OCI-LY7 (cell line): ENCODE measurements at regions of chr6 and their contacts with region 1.

Region 1: DNA sequence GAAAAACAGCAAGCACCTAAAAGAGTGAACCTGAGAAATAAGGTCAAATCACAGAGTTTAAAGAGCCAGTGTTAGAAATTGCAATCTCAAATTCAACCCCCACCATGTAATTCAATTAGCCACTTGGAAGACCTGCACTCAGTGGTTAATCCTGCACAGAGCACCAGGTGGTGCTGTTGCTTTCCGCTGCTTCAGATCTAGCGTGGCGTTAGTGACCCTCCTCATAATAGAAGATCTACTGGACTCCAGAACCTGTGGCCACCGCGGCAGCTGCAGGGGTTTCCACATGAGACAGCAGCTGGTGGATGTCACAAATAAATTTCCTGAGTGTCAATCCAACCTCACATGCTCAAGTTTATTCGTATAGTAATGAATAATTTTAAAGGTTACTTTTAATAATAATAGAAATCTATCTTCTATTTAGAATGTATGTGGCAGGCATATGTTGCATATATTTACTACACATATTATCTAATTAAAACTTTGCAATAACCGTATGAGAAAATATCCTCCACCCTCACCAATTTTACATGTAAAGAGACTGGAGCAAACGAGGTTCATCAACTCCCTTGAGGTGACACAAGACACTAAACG is 84.4 kb downstream of the SYNE1 start:
- DNase-seq: peak; percentile 74
- H3K4me3 ChIP-seq: no peak overlapping the region
- H3K27ac ChIP-seq: no peak overlapping the region
- H3K4me1 ChIP-seq: no peaks in the 10 kb centered on the region
- CTCF ChIP-seq: peak; percentile 95

Region 2: GRCh38 chr6:152295346-152295745 is 257.4 kb before region 1 on chr6:
- CTCF ChIA-PET with region 1: no interaction called
- POLR2A ChIA-PET with region 1: no interaction called
- intact Hi-C with region 1: no loop called
- DNase-seq: no peak
- H3K4me3 ChIP-seq: no peak overlapping the region
- H3K27ac ChIP-seq: no peak overlapping the region
- H3K4me1 ChIP-seq: peaks cover 43% of the 10 kb centered on the region
- CTCF ChIP-seq: no peak

Region 3: GRCh38 chr6:152642989-152643388 is 90.3 kb after region 1 on chr6:
- CTCF ChIA-PET with region 1: no interaction called
- POLR2A ChIA-PET with region 1: no interaction called
- intact Hi-C with region 1: loop called (anchors 1 kb)
- DNase-seq: peak; percentile 84
- H3K4me3 ChIP-seq: no peak overlapping the region
- H3K27ac ChIP-seq: no peak overlapping the region
- H3K4me1 ChIP-seq: peaks cover 6% of the 10 kb centered on the region
- CTCF ChIP-seq: peak; percentile 85

Region 4: GRCh38 chr6:152669895-152670294 is 117.2 kb after region 1 on chr6:
- CTCF ChIA-PET with region 1: interaction called, 3 read pairs
- POLR2A ChIA-PET with region 1: interaction called, 4 read pairs
- intact Hi-C with region 1: loop called (anchors 1 kb)
- DNase-seq: peak; percentile 53
- H3K4me3 ChIP-seq: no peak overlapping the region
- H3K27ac ChIP-seq: no peak overlapping the region
- H3K4me1 ChIP-seq: peaks cover 14% of the 10 kb centered on the region
- CTCF ChIP-seq: peak; percentile 82

Region 5: DNA sequence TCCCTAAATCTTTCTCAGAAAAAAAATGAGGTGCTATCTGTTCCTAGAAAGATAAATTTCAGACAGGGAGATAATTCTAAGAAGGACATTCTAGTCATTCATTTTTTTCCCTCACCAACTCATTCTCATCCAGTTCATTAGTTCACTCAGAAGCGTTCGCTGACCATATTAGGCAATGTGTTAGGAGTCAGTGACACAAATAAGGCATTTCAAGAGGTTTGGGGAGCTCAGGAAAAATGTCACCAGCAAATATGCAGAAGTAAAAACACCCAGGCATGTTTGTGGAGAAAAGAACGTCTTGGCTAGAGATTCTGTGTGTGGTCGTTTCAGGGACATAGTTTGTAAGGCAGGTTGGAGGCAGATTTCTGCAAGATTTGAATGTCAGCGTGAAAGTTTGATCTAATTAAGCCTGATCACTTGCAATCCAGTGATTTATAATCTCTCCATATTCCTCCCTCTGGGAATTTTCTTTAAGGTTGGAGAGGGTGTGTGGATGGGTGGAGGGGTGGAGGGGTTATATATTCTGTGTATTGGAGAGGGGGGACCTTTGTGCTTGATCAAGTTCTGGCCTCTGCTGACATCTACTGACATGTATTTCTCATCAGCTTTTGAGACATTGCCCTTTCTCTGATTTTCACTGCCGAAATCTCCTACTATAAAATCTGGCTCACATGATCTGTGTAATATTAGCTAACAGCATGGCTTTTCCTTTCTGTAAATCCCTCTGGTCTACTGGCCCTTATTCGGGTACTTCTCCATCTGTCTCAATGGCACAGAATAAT is 148.6 kb after region 1 on chr6:
- CTCF ChIA-PET with region 1: no interaction called
- POLR2A ChIA-PET with region 1: interaction called, 3 read pairs
- intact Hi-C with region 1: loop called (anchors 1 kb)
- DNase-seq: peak; percentile 46
- H3K4me3 ChIP-seq: peak overlapping the region; percentile 7
- H3K27ac ChIP-seq: no peak overlapping the region
- H3K4me1 ChIP-seq: peaks cover 18% of the 10 kb centered on the region
- CTCF ChIP-seq: peak; percentile 82

Region 6: GRCh38 chr6:152948150-152948768 is 395.5 kb after region 1 on chr6:
- CTCF ChIA-PET with region 1: no interaction called
- POLR2A ChIA-PET with region 1: no interaction called
- intact Hi-C with region 1: loop called (anchors 10 kb)
- DNase-seq: peak; percentile 53
- H3K4me3 ChIP-seq: no peak overlapping the region
- H3K27ac ChIP-seq: no peak overlapping the region
- H3K4me1 ChIP-seq: no peaks in the 10 kb centered on the region
- CTCF ChIP-seq: peak; percentile 88